PC-9 (cell line): ENCODE measurements at regions of chr1 and their contacts with region 1.

Region 1: GRCh38 chr1:147890177-147890790 is 12.3 kb upstream of the GJA8 start:
- DNase-seq: peak; percentile 72 to 84
- H3K4me3 ChIP-seq: no peak overlapping the region
- H3K27ac ChIP-seq: peak overlapping the region; percentile 48; the same call in 1 of the 2 replicates
- H3K4me1 ChIP-seq: peaks cover 18% of the 10 kb centered on the region
- H3K27me3 ChIP-seq: no peaks in the 10 kb centered on the region
- CTCF ChIP-seq: peak; percentile 96

Region 2: DNA sequence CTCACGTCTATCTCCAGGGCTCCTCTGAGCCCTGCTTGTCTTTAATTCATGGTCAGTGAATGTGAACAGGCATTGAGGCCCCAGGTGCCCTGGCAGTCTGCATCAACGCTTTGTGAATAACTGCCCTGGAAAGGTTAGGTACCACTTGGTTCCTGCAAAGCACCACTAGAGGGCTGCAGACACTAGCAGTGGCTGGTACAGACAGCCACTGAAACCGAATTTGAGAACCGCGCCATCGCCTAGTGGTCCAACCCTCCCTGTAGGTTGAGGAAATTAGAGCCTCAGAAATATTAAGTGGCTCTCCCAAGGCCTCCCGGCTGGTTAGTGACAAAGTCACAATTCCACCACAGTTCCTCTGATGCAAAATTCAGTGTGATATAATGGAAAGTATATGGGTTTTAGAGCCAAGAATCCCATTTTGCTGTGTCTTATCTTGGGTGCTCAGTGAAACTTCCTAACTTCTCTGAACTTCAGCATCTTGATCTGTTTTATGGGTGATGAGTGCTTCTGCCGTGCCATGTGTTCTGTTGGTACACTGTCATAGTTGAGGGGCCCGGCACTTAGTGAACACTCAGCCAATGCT is 395.2 kb before region 1 on chr1:
- CTCF ChIA-PET with region 1: interaction called, 3 read pairs
- POLR2A ChIA-PET with region 1: no interaction called
- intact Hi-C with region 1: loop called (anchors 1 kb)
- DNase-seq: peak; percentile 61 to 65
- H3K4me3 ChIP-seq: no peak overlapping the region
- H3K27ac ChIP-seq: no peak overlapping the region
- H3K4me1 ChIP-seq: no peaks in the 10 kb centered on the region
- H3K27me3 ChIP-seq: no peaks in the 10 kb centered on the region
- CTCF ChIP-seq: peak; percentile 93

Region 3: DNA sequence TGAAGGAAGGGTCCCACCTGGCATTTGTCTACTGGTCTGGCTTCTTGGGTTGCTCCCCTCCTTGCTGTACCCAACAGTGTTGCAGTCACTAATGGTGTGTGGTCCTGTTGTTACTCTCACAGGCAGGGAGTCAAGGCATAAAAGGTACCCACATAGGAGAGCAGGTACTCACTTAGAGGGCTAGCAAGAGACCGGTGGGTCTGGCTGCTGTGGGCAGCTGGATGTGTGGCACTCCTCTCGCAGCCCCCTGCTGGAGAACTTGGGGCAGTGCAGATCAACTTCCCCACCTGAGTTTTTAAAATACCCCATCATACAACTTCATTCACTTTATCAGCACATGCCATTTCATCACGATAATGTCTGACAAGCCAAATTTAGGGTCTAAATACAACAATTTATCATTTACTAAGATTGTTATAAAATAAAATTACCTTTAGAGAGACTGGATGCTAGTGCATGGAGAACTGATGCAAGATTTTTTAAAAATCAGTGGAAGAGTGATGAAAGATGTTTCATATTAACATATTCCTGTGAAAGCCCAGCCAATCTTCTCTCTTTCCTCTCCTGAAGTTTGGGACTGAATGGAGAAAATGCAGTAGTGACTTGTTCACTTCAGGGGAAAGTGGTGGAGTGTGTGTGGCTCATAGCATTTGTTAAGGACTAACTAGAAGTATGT is 262.7 kb before region 1 on chr1:
- CTCF ChIA-PET with region 1: interaction called, 3 read pairs
- POLR2A ChIA-PET with region 1: no interaction called
- intact Hi-C with region 1: loop called (anchors 1 kb)
- DNase-seq: peak in 1 of 2 experiments; percentile 25
- H3K4me3 ChIP-seq: no peak overlapping the region
- H3K27ac ChIP-seq: 0 out of 2 replicates have a peak overlapping the region, but pooled peaks have one; percentile 9
- H3K4me1 ChIP-seq: no peaks in the 10 kb centered on the region
- H3K27me3 ChIP-seq: no peaks in the 10 kb centered on the region
- CTCF ChIP-seq: peak; percentile 94

Region 4: DNA sequence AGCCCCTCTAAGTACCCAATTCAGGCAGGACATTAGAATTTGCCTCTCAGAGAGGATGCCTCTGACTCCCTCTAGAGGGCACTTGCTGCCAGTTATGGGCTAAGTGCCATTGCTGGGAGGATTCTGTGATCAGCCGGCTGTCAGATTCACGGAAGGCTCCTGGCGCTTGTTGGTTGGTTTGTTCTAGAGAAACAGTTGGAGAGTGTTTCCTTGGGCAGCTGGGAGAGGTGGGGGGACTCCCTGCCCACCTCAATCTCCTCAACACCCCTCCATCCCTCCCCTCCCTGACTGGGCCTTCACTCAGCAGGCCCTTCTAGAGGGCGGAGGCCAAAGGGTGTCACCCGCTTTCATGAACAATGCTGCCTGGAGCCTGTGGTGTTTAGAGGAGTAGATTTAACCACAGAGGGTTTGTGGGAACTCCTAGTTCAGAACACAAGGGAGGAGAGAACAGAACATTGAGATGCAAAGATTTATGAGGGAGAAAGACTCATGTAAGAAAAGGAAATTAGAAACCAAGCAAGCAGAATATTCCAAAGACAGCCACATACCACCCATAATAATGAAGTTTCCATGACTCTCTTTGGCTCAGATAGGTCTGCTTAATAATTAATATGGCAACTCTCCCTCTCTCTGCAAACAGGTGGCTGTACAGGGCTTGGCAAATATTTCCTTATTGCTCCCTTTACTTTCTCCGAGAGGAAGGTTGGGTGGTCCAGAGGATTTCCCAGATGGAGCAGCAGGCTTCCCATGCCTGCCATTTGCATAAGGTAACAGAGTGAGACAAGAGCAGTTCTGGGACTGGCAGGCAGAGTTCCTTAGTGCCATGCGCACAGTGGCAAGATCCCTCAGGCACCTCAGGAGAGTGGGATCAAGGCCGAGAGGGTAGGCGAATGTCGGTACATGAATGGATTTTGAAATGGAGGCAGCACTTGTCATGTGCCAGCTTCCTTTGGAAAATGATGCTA is 190.0 kb before region 1 on chr1:
- CTCF ChIA-PET with region 1: no interaction called
- POLR2A ChIA-PET with region 1: no interaction called
- intact Hi-C with region 1: loop called (anchors 1 kb)
- DNase-seq: peak in 1 of 2 experiments; percentile 59
- H3K4me3 ChIP-seq: no peak overlapping the region
- H3K27ac ChIP-seq: no peak overlapping the region
- H3K4me1 ChIP-seq: no peaks in the 10 kb centered on the region
- H3K27me3 ChIP-seq: no peaks in the 10 kb centered on the region
- CTCF ChIP-seq: peak; percentile 84

Region 5: DNA sequence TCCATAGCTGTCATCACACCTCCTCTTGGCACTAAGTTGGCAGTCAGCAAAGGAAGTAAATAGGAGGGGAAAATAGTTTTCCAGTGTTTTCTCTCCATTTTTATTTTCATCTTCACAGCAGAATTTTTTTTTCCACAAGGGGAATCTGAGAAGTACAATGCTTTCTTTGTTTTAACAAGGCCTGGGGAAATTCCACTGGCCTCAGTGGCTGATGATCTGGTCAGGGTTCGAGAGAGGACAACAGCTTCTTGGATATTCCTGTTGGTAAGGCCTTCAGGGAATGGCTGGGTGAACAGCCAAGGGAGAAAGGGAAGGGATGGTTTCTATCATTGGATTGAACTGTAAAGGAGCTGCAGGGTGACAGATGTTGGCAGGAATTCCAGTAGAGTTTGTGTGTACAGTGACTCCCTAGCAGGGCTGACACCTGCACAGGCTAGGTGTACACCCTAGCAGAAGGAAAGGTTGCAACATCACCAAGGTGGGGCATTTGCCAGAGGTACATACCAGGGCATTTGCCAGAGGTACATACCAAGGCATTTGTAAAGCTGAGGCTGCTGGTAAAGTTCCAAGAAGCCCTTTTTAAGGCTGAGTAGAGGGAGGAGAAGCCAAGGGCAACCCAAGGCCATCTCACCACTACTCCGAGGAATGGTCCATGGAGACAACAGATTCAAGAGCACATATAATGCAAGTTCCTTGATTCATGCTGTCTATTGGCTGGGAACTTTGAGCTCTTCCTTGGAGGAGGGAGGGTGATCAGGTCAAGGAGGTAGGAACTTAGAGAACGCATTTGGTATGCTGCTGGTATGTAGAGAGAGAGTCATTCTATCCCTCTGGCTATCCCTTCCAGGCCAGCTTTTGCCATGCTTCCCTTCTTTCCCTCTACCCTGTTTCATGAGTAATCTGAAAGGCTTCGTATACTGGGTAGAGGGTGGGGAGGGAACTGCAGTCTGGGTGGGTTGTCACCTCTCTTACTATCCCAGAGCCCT is 133.0 kb before region 1 on chr1:
- CTCF ChIA-PET with region 1: no interaction called
- POLR2A ChIA-PET with region 1: no interaction called
- intact Hi-C with region 1: loop called (anchors 1 kb)
- DNase-seq: peak; percentile 85 to 98
- H3K4me3 ChIP-seq: peak overlapping the region; percentile 19; the same call in 1 of the 2 replicates
- H3K27ac ChIP-seq: peak overlapping the region; percentile 92
- H3K4me1 ChIP-seq: peaks cover 75% of the 10 kb centered on the region
- H3K27me3 ChIP-seq: no peaks in the 10 kb centered on the region
- CTCF ChIP-seq: no peak

Region 6: DNA sequence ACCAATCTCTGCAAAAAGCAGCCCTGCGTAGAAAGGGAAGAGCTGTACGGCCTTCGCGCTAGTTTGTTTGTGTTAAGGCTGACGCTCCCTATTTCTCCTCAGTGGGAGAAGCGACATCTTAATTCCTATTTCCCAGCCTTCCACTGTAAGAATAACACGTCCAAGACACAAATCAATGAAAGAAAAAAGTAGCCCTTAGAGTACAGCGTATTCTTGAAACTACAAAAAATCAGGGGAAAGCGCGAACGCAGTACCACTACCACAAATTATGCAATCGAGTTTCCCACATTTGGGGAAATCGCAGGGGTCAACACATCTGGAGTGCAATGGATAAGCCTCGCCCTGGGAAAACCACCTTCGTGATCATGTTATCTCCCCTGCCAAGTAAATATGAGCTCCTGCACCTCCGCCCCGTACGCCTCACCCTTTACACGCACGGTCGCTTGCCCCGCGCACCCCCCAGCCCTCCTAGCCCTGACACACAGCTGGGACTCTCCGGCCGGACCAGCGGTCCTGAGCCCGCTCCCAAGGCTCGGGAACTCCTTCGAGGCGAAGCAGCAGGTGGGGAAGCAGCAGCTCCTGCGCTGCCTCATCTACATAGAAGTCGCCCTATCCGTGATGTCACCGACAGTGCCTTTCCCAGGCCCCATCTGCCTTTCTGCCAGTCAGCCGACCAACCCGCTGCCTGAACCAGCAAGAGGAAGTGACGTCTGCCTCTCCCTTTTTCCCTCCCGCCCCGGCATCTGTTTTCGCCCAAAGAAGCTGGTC is 498.2 kb after region 1 on chr1:
- CTCF ChIA-PET with region 1: no interaction called
- POLR2A ChIA-PET with region 1: no interaction called
- intact Hi-C with region 1: no loop called
- DNase-seq: peak; percentile 89 to 91
- H3K4me3 ChIP-seq: peak overlapping the region; percentile 69
- H3K27ac ChIP-seq: peak overlapping the region; percentile 93
- H3K4me1 ChIP-seq: peaks cover 16% of the 10 kb centered on the region
- H3K27me3 ChIP-seq: no peaks in the 10 kb centered on the region
- CTCF ChIP-seq: no peak